H1 (cell line): ENCODE measurements at regions of chr16 and their contacts with region 1.

Region 1: DNA sequence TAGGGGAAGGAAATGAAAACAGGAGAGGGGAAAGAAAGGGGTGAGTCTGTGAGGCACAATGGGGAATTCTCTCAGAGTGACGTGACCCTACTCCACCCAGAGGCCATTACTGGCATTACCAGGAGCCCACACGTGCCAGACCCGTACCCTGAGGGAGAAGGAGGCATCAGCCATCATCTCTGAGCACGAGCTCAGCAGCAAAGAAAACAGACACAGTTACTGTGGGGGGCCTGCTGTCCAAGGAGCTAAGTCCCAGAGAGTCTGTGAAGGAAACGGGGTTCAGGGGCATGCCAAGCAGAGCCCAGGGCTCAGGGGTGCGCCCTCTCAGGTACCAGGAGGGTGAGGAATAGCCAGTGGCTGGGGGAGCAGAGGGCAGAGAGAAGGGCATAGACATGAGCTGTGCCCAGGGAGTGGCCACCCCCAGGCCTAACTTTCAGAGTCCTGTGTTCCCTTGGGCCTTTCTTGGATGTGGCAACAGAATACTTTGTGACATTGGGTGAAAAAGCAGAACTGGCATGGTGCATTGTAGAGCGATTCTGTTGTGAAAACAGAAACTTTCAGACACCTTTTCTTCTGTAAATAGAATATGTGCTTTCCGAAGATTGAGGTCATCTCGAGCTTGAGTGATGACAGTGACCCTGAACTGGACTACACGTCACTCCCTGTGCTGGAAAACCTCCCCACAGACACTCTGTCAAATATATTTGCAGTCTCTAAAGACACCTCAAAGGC is 11.3 kb downstream of the TAF1C start:
- DNase-seq: peak; percentile 34 to 90
- H3K4me3 ChIP-seq: no peak overlapping the region
- H3K27ac ChIP-seq: no peak overlapping the region
- H3K4me1 ChIP-seq: no peaks in the 10 kb centered on the region
- H3K27me3 ChIP-seq: no peaks in the 10 kb centered on the region
- CTCF ChIP-seq: peak; percentile 77 to 95 (median 92)
- EP300 ChIP-seq: no peak
- POLR2A ChIP-seq: no peak
- RAD21 ChIP-seq: peak; percentile 87 to 89

Region 2: GRCh38 chr16:84084570-84085270 is 90.8 kb before region 1 on chr16:
- CTCF ChIA-PET with region 1: interaction called, 93 read pairs
- POLR2A ChIA-PET with region 1: interaction called, 4 read pairs
- DNase-seq: peak; percentile 49 to 80
- H3K4me3 ChIP-seq: no peak overlapping the region
- H3K27ac ChIP-seq: no peak overlapping the region
- H3K4me1 ChIP-seq: no peaks in the 10 kb centered on the region
- H3K27me3 ChIP-seq: no peaks in the 10 kb centered on the region
- CTCF ChIP-seq: peak; percentile 88 to 97 (median 97)
- EP300 ChIP-seq: no peak
- POLR2A ChIP-seq: no peak
- RAD21 ChIP-seq: peak; percentile 72 to 79

Region 3: DNA sequence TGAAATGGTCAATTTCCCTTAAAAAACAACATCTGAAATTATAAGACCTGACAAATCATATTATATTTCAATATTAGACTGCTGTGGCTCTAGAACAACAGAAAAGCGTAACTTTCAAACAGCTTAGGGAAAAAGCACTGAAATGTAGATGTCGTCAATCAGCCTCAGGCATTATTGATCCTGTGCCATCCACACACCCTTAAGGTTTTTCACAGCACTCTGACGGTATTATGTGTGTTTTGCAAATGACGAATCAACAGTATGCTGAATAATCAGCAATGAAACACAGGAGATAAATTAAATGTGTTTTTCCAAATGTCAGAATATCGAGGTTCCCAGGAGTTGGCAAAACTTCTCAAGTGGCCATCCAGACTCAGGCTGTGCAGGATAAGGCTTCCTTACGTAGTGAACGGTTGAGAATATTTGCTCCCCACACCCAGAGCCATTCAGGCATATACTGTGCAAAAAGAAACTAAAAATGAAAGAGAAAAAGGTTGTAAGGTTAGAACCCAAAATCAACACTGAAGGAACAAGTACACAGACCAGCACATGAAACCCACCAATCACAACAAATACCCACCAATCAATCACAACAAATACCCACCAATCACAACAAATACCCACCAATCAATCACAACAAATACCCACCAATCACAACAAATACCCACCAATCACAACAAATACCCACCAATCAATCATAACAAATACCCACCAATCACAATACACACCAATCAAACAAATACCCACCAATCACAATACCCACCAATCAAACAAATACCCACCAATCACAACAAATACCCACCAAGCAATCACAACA is 51.1 kb before region 1 on chr16:
- CTCF ChIA-PET with region 1: interaction called, 10 read pairs
- POLR2A ChIA-PET with region 1: no interaction called
- DNase-seq: no peak
- H3K4me3 ChIP-seq: no peak overlapping the region
- H3K27ac ChIP-seq: no peak overlapping the region
- H3K4me1 ChIP-seq: no peaks in the 10 kb centered on the region
- H3K27me3 ChIP-seq: no peaks in the 10 kb centered on the region
- CTCF ChIP-seq: no peak
- EP300 ChIP-seq: no peak
- POLR2A ChIP-seq: no peak
- RAD21 ChIP-seq: no peak

Region 4: DNA sequence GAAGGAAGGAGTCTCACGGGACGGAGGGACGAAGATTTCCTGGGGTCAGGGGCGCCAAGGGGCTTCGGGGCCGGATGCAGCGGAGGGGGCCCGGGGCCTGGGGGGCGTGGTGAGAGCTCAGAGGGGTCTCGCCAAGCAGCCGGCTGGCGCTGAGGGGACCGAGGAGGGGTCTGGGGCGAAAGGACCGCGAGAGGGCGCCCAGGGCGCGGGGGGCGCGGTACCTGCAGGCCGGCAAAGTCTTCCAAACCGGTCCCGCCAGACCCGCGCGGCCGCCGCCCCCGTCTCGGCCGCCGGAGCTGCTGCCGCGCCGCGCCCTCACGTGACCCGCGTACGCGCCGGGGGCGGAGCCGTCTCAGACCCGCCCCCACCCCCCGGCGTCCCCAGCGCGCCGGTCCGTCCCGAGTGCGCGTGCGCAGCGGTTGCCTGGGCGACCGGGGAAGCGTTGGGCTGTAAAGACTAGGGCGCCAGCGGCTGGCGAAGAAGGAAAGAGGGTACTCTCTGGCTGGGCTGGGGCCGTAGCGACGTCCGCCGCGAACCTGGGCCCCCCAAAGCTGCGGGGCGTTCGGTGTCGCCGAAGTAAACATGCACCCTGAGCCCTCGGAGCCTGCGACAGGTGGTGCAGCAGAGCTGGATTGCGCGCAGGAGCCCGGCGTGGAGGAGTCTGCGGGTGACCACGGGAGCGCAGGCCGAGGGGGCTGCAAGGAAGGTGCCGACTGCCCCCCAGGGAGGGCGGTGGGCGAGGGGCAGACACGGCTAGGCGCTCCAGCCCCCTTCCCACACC is 30.5 kb before region 1 on chr16 and contains the starts of genes DNAAF1 and HSDL1:
- CTCF ChIA-PET with region 1: interaction called, 18 read pairs
- POLR2A ChIA-PET with region 1: no interaction called
- DNase-seq: peak; percentile 67 to 99
- H3K4me3 ChIP-seq: peak within 1 kb of the TSS; percentile 88 to 97 (median 92)
- H3K27ac ChIP-seq: no peak within 1 kb of the TSS
- H3K4me1 ChIP-seq: peaks cover 0 to 10% (median 2%) of the 10 kb centered on the region in 4 experiments; a peak in 3 of 7 replicates
- H3K27me3 ChIP-seq: peaks cover 0 to 7% (median 3%) of the 10 kb centered on the region in 4 experiments; a peak in 2 of 7 replicates
- CTCF ChIP-seq: peak in 2 of 3 experiments; percentile 19 to 34; a peak in 3 of 4 replicates
- EP300 ChIP-seq: no peak
- POLR2A ChIP-seq: peak in 1 of 2 experiments; percentile 52; a peak in 2 of 3 replicates
- RAD21 ChIP-seq: peak in 1 of 2 experiments; percentile 17; a peak in 2 of 4 replicates
- total RNA-seq, gene DNAAF1: 0.09 and 0.27 TPM in 2 replicates
- total RNA-seq, gene HSDL1: 55.7 and 58.5 TPM in 2 replicates

Region 5: DNA sequence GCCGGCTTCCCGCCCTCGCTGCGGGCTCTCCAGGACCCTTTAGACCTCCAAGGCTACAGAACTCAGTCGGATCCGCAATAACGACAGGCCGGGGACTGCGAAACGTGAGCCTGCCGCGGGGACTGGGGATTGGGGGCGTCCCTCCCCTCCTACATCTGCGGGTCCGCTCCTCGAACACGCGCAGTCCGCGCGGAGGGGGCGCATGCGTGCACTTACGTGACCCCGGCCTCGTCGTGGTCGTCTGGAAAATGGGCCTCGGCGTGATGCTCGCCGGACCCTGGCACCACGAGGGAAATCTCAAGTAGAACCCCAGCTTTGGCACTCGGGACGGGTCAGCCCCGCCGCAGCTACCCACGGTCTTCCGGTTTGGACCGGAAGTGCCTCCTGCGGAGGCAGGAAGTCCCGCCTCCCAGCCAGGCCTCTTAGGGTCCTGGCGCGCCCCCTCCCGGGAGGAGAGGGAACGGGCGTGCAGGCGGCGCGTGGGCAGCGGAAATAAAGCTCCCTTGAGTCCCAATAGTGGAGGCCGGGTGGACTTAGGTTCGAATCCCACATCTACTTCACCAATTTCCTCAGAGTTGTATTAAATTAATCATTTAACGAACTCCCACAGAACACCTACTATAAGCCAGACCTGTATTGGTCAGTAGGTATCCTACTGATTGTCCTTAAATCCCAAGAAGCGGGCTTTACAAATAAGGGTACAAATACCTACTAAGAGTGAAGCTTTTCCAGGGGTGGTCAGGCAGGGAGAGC is 11.3 kb after region 1 on chr16 and contains the start of gene TAF1C:
- CTCF ChIA-PET with region 1: interaction called, 54 read pairs
- POLR2A ChIA-PET with region 1: interaction called, 6 read pairs
- DNase-seq: peak; percentile 85 to 93
- H3K4me3 ChIP-seq: peak within 1 kb of the TSS; percentile 81 to 96 (median 94)
- H3K27ac ChIP-seq: peak within 1 kb of the TSS; percentile 29; the same call in 1 of the 2 replicates
- H3K4me1 ChIP-seq: peaks cover 0 to 2% (median 0%) of the 10 kb centered on the region in 4 experiments; a peak in 3 of 7 replicates
- H3K27me3 ChIP-seq: no peaks in the 10 kb centered on the region
- CTCF ChIP-seq: peak; percentile 84 to 94 (median 89)
- EP300 ChIP-seq: 0 out of 3 replicates have a peak, but pooled peaks of 1 of the 2 experiments have one; percentile 54
- POLR2A ChIP-seq: peak in 1 of 2 experiments; percentile 82; a peak in 2 of 3 replicates
- RAD21 ChIP-seq: peak; percentile 60 to 78
- total RNA-seq, gene TAF1C: 63.8 and 68.0 TPM in 2 replicates

Region 6: DNA sequence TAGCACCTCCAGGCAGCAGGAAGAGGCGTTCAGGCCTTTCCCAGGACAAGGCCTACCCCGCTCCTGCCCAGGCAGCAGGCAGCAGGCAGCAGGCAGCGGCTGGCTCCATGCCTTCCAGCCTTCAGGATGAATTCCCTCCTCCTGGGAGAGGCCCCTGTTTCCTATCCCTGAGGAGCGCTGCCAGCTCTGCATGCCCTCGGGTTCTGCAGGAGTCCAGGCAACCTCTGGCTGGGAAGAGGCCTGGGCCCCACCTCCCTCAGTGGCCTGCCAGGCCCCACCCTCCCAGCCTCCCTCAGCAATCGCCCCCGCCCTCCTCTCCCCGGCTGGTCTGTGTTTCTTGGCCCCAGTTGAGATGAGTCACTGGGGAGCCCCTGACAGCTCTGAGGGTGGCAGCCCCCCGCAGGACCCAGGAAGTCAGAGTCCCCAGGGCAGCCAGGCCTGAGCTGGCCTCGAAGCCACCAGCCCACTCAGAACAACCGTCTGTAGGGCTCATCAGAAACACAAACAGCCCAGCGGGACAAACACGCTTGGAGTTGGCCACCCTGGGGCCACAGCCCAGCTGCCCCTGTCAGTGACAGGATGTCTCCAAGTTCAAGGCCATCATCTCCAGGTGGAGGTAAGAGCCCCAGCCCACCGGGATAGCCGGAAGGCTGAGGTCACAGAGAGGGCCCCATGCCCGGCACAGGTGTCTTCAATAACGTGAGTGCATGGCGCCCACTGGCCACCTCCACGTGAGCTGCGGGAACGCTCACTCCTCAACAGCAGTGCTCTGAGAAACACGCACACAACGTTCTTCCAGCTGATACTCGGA is 976.3 kb after region 1 on chr16:
- CTCF ChIA-PET with region 1: no interaction called
- POLR2A ChIA-PET with region 1: no interaction called
- DNase-seq: no peak
- H3K4me3 ChIP-seq: no peak overlapping the region
- H3K27ac ChIP-seq: no peak overlapping the region
- H3K4me1 ChIP-seq: peaks cover 0 to 2% (median 0%) of the 10 kb centered on the region in 4 experiments; a peak in 2 of 7 replicates
- H3K27me3 ChIP-seq: no peaks in the 10 kb centered on the region
- CTCF ChIP-seq: no peak
- EP300 ChIP-seq: no peak
- POLR2A ChIP-seq: no peak
- RAD21 ChIP-seq: no peak